ENCODE measurements at regions of chr3 and their contacts with region 1.

Region 1: DNA sequence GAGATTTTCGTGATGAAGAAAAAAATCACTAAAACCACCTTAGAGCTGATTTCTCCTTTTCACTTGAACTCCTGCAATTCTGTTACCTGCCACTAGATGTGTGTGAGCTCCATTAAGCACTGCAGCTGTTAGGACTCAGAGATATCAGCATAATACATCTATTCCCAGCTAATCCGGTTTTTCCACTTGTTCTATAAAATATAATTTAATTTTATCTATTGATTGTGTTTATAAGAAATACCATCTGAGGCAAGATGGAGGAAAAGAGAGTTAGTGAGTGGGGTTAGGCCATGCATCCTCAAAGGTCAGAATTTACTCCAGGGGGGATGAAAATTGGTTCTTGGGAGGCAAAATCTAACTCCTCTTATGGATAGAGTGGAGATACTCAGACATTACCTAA is 152.7 kb downstream of the IL20RB start:
- DNase-seq: no peak
- ATAC-seq: no peak
- H3K4me3 Mint-ChIP-seq: no peak overlapping the region
- H3K27ac Mint-ChIP-seq: no peak overlapping the region
- H3K4me1 Mint-ChIP-seq: no peaks in the 10 kb centered on the region
- H3K27me3 Mint-ChIP-seq: peaks cover 7% of the 10 kb centered on the region

Region 2: GRCh38 chr3:137121704-137122314 is 11.3 kb after region 1 on chr3:
- CTCF ChIA-PET with region 1: interaction called, 10 read pairs
- POLR2A ChIA-PET with region 1: no interaction called
- DNase-seq: peak; percentile 34
- ATAC-seq: no peak
- H3K4me3 Mint-ChIP-seq: no peak overlapping the region
- H3K27ac Mint-ChIP-seq: no peak overlapping the region
- H3K4me1 Mint-ChIP-seq: no peaks in the 10 kb centered on the region
- H3K27me3 Mint-ChIP-seq: peaks cover 14% of the 10 kb centered on the region

Region 3: DNA sequence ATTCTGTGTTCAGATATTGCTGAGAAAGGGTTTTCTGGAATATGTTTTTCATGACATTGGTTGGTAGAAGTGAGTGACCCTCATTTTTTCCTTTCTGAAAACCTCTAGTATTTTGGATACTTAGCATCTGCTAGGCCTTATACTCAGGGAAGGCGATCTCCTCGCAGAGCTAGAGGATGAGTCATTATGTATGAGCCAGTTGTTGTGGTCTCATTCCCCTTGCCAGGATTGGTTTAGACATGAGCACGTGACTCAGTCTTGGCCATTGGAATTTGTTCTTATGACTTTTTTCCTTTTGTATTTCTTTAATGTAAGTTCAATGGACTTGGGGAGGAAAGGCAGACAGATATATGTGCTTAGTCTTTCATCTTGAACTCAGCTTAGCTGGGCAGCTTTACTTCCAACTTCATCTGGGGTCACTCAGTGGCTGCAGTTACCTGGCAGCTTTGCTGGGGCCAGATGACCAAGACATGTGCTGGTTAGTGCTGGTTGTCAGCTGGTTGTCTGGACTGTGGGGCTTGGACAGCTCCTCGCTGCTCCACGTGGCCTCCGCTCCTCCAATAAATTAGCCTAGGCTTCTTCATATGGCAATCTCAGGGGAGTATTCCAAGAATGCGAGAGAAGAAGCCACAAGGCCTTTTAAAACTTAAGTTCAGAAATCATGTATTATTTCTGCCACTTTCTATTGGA is 54.8 kb after region 1 on chr3:
- CTCF ChIA-PET with region 1: no interaction called
- POLR2A ChIA-PET with region 1: no interaction called
- DNase-seq: no peak
- ATAC-seq: no peak
- H3K4me3 Mint-ChIP-seq: no peak overlapping the region
- H3K27ac Mint-ChIP-seq: no peak overlapping the region
- H3K4me1 Mint-ChIP-seq: no peaks in the 10 kb centered on the region
- H3K27me3 Mint-ChIP-seq: peaks cover 3% of the 10 kb centered on the region

Measured in activated CD8-positive, alpha-beta T cell treated with anti-CD3 and anti-CD28 coated beads, Interleukin-2, amount 10 ng/mL, durations not matched to agents 7 days and 5 days (primary cell).